ENCODE measurements at regions of chr2 and their contacts with region 1.

Region 1: DNA sequence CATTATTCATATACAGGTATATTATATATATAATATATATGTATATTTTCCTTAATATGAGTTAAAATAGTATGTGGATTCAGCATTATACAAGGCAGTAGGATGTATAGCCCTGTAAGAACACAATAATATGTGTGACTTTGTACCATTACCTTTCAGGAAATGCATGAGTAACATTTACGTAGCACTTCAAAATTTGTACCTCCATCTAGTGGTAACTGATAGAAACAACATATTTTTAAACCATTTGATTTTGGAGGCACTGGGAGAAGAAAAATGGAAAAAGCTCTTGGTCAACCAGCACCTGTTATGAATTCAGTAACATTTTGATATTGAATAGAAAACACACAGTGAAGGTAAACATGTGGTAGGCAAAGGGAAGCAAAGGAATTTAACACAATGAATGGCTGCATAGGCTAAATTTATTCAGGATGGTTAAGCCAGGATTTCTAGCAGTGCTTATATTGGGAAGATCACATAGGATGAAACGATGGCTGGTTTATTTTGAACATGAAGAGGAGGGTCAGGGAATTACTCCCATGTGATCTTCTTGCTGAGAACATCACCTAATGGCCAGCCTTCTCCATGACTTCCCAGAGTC is 565.5 kb downstream of the CCDC85A start:
- DNase-seq: peak; percentile 55
- H3K4me3 ChIP-seq: no peak overlapping the region
- H3K27ac ChIP-seq: no peak overlapping the region
- H3K4me1 ChIP-seq: no peaks in the 10 kb centered on the region
- H3K27me3 ChIP-seq: no peaks in the 10 kb centered on the region
- CTCF ChIP-seq: peak; percentile 25 to 29
- POLR2A ChIP-seq: no peak

Region 2: DNA sequence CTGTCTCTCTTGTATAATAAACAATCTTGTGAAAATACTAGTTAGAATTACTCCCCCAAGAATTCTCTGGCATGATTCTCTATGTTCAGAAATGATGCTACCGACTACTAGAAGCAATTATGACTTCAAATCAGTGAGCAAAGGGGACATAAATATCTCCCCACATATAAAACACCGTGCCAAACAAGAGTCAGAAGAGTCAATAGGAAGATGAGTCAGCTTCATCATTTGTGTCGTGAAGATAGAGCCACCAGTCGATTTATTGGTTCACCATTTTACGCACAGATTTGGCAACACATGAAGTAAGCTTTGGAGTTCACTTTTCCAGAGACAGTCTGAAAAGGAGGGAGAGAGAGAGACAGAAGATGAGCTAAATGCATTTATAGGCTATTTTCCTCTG is 85.4 kb after region 1 on chr2:
- CTCF ChIA-PET with region 1: no interaction called
- POLR2A ChIA-PET with region 1: no interaction called
- dilution Hi-C with region 1: no loop called
- intact Hi-C with region 1: no loop called
- DNase-seq: no peak
- H3K4me3 ChIP-seq: no peak overlapping the region
- H3K27ac ChIP-seq: no peak overlapping the region
- H3K4me1 ChIP-seq: no peaks in the 10 kb centered on the region
- H3K27me3 ChIP-seq: no peaks in the 10 kb centered on the region
- CTCF ChIP-seq: no peak
- POLR2A ChIP-seq: no peak

Region 3: DNA sequence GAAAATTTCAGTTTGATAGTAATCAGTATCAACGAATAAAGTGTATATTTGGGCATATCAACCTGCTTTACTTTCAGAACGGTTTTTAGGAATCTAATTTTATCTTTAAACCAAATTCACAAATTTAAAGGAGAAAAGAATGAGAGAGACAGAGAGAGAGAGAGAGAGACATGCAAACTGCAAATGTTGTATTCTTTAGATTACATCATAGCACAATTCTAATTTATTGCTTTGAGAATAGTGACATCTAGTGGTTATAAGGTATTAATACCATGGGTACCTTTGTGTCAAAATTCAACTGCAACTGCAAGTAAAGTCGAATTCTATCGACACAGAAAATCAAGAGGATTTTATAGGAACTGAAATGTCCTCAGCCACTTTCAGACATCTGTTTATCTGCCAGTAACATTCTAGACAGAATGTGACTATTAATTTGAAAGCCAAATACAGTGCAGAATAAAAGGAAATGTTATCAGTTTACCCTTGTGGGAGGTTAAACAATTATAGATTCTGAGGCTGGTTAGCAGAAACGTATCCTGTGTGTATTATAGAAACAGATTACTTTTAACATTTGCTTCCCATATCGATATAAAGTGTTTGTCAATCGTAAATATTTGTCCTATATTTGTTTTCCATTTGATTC is 767.6 kb after region 1 on chr2:
- CTCF ChIA-PET with region 1: no interaction called
- POLR2A ChIA-PET with region 1: no interaction called
- dilution Hi-C with region 1: no loop called
- intact Hi-C with region 1: loop called (anchors 5 kb)
- DNase-seq: peak; percentile 58
- H3K4me3 ChIP-seq: no peak overlapping the region
- H3K27ac ChIP-seq: no peak overlapping the region
- H3K4me1 ChIP-seq: no peaks in the 10 kb centered on the region
- H3K27me3 ChIP-seq: peaks cover 0 to 1% of the 10 kb centered on the region in 2 experiments
- CTCF ChIP-seq: peak; percentile 16 to 24
- POLR2A ChIP-seq: no peak

Measured in endothelial cell of umbilical vein (primary cell).